Vagina (tissue), 2 donors: ENCODE measurements at regions of chr21 and their contacts with region 1.

Region 1: GRCh38 chr21:34888569-34889319 is 160.4 kb downstream of the RUNX1 start:
- DNase-seq: peak in 1 of 2 donors; percentile 96
- H3K4me3 ChIP-seq: peak overlapping the region; percentile 64 to 84
- H3K27ac ChIP-seq: peak overlapping the region; percentile 90
- H3K4me1 ChIP-seq: peaks cover 16% of the 10 kb centered on the region
- H3K27me3 ChIP-seq: no peaks in the 10 kb centered on the region
- CTCF ChIP-seq: no peak
- POLR2A ChIP-seq: peak in 1 of 2 donors; percentile 95

Region 2: GRCh38 chr21:34795175-34795547 is 93.6 kb before region 1 on chr21:
- intact Hi-C with region 1: loop called (anchors 5 kb)
- DNase-seq: peak in 1 of 2 donors; percentile 82
- H3K4me3 ChIP-seq: no peak overlapping the region
- H3K27ac ChIP-seq: peak overlapping the region; percentile 70
- H3K4me1 ChIP-seq: peaks cover 38% of the 10 kb centered on the region
- H3K27me3 ChIP-seq: no peaks in the 10 kb centered on the region
- CTCF ChIP-seq: no peak
- POLR2A ChIP-seq: no peak

Region 3: DNA sequence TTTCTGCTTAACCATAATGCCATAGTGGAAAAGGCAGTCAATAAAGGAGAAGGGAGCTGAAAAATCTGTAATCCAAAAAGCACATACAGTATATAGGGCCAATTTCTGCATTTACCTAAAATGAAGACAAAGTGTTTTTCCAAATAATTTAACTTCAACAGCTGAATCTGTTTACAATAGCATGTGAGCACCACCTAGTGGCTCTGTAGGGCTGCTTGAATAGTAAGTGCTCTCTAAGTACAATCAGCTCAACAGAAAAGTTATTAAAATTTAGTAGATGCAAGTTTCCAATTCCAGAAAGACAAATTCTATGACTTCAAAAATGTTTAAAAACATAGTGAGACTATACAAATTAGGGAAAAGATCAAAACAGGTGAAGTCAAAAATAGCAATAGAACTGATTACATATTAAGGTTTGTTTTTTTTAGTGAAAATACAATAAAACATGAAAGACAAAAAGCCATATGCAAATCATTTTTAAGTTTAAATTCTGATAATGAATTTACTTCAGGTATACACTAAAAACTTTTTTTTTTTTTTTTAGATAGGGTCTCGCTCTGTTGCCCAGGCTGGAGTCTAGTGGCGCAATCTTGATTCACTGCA is 951.6 kb after region 1 on chr21:
- intact Hi-C with region 1: loop called (anchors 5 kb)
- DNase-seq: no peak
- H3K4me3 ChIP-seq: no peak overlapping the region
- H3K27ac ChIP-seq: no peak overlapping the region
- H3K4me1 ChIP-seq: peaks cover 9% of the 10 kb centered on the region
- H3K27me3 ChIP-seq: no peaks in the 10 kb centered on the region
- CTCF ChIP-seq: peak in 2 of 3 experiments; percentile 22 to 69
- POLR2A ChIP-seq: no peak